Activated CD4-positive, alpha-beta memory T cell treated with anti-CD3 and anti-CD28 coated beads for 36 hours (primary cell): ENCODE measurements at regions of chr14 and their contacts with region 1.

Region 1: GRCh38 chr14:70600382-70601157 is at the start of gene MED6:
- DNase-seq: peak; percentile 97
- H3K4me3 Mint-ChIP-seq: peak within 1 kb of the TSS; percentile 99
- H3K27ac Mint-ChIP-seq: peak within 1 kb of the TSS; percentile 88
- H3K4me1 Mint-ChIP-seq: peaks cover 28% of the 10 kb centered on the region
- H3K27me3 Mint-ChIP-seq: no peaks in the 10 kb centered on the region
- total RNA-seq, gene MED6: 39.7 to 47.1 TPM

Region 2: DNA sequence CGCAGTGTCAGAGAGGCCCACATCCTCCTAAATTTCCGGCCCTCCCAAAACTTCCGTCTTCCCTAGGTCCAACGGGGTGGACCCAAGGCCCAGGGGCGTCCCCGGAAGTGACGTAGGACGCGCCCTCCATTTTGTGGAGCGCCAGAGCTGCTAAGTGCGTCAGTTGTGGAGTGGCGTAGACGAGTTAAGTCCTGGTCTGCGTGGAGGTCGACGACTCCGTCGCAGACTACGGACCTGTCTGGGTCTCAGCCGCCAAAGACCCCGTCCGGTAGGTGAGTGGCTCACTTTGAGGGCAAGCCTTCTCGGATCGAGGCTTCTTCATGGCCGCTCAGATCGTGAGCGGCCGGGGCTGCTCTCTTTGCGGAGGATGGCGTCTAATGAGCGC is 833.6 kb before region 1 on chr14 and contains the start of gene SRSF5:
- CTCF ChIA-PET with region 1: no interaction called
- POLR2A ChIA-PET with region 1: no interaction called
- intact Hi-C with region 1: loop called (anchors 1 kb)
- DNase-seq: peak; percentile 96
- H3K4me3 Mint-ChIP-seq: peak within 1 kb of the TSS; percentile 99
- H3K27ac Mint-ChIP-seq: peak within 1 kb of the TSS; percentile 99
- H3K4me1 Mint-ChIP-seq: peaks cover 73% of the 10 kb centered on the region
- H3K27me3 Mint-ChIP-seq: no peaks in the 10 kb centered on the region
- total RNA-seq, gene SRSF5: 289 to 303 TPM

Region 3: DNA sequence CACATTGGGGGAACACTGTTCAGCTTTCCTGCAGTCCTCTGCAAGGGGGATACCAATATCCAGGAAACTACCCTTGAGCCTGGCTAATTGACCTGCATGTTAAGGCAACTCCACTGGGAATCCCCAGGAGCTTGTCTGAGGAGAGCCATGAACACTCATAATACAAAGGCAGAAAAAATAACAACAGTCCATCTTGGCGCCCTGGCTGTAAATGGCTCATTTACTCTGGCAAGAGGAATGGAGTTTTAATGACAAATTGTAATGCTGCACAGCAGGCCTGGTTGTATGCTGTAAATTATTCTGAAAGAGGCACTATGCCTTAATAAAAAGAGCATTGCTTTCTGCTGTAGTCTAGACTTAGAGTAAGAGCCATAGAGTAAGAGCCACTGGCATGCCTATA is 470.1 kb before region 1 on chr14:
- CTCF ChIA-PET with region 1: no interaction called
- POLR2A ChIA-PET with region 1: no interaction called
- intact Hi-C with region 1: no loop called
- DNase-seq: no peak
- H3K4me3 Mint-ChIP-seq: no peak overlapping the region
- H3K27ac Mint-ChIP-seq: no peak overlapping the region
- H3K4me1 Mint-ChIP-seq: no peaks in the 10 kb centered on the region
- H3K27me3 Mint-ChIP-seq: peaks cover 19% of the 10 kb centered on the region

Region 4: DNA sequence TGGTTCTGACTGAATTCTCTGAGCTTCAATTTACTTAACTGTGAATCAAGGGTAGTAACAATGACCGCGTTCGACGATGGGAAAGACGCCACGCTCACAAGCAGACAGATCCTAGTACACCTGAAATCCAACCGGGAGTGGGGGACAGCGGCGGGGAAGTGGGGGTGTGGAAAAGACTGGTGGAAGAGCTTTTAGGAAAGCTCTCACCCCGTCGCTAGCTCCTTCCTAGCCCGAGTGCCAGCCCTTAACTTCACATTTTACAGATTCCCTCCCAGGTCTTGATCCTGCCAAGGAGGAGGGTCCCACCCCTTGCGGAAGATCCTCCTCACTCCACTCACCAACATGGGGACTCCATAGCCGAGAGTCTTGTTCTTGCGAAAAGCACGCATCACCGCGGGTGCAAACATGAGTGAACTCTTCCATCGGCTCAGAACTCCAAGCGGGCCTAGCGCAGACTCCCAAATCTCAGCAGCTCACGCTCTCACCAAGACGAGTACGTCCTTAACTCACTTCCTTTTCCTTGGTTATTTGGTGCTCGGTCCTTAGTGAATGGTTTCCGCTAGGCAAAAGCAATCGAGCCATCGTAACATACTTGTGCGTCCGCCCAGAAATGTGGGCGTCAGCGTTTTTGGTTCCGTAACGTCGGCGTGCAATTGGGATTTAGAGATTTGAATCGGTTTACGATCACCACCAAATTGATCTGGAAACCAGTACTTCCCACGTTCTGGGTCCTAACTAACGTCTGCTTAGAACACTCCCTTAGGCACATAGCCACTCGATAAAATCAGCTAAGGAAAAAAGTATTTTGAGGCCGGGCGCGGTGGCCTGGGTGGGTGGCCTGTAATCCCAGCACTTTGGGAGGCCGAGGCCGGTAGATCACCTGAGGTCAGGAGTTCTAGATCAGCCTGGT is 241.1 kb before region 1 on chr14 and contains the start of gene COX16:
- CTCF ChIA-PET with region 1: interaction called, 4 read pairs
- POLR2A ChIA-PET with region 1: no interaction called
- intact Hi-C with region 1: loop called (anchors 1 kb)
- DNase-seq: peak; percentile 90
- H3K4me3 Mint-ChIP-seq: peak within 1 kb of the TSS; percentile 99
- H3K27ac Mint-ChIP-seq: peak within 1 kb of the TSS; percentile 89
- H3K4me1 Mint-ChIP-seq: peaks cover 33% of the 10 kb centered on the region
- H3K27me3 Mint-ChIP-seq: no peaks in the 10 kb centered on the region
- total RNA-seq, gene COX16: 54.6 to 56.5 TPM

Region 5: DNA sequence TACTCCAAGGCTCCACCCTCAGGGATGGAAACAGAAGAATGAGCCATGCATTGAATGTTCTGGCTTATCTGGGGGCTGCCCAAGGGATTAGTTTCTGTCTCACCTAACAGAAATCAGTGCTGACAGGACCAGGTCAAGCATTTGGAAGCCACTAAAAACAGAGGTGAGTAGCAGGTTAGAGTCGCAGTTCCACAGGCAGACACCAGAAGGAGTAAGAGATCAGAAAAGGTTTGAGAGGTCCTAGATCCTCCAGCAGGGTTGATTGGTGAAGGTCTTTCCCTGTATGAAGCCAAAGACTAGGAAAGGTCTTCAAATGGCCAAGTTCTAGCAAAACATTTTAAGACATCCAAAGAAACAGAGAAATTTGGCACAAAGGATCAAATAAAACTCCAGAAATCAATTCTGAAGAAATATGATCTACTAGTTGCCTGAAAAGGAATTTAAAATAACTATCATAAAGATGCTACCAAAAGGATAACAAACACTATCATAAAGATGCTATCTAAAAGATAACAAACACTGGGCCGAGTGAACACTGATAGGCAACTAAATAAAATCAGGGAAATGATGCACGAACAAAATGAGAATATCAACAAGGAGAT is 21.6 kb after region 1 on chr14:
- CTCF ChIA-PET with region 1: no interaction called
- POLR2A ChIA-PET with region 1: no interaction called
- intact Hi-C with region 1: no loop called
- DNase-seq: peak; percentile 61
- H3K4me3 Mint-ChIP-seq: no peak overlapping the region
- H3K27ac Mint-ChIP-seq: no peak overlapping the region
- H3K4me1 Mint-ChIP-seq: no peaks in the 10 kb centered on the region
- H3K27me3 Mint-ChIP-seq: no peaks in the 10 kb centered on the region

Region 6: DNA sequence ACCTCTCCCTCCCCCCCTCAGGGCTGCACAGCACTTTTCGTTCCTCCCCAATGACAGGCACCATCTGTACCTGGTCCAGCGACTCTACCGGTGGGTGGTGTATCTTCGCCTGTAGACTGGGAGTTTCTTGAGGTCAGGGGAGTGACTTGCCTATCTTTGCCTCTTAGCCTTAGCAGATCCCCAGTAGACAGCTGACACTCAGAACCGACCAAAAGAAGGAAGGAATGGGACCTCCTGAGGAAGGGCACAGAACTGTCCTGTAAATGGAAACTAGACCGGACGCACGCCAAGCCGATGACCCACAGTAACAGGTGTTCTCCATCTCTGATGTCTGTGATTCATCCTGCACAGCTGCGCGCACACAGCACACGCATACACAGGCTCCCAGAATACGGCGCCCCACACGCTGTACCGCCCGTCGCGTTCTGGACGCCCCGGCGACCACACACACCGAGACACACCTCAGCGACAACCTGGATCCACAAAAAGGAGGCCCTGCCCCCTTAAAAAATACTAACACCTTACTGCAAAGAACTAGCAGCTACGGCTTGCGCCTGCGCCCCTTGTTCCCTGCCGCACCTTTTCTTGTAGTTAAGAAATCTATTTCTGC is 40.5 kb after region 1 on chr14:
- CTCF ChIA-PET with region 1: no interaction called
- POLR2A ChIA-PET with region 1: no interaction called
- intact Hi-C with region 1: loop called (anchors 2 kb)
- DNase-seq: peak; percentile 79
- H3K4me3 Mint-ChIP-seq: peak overlapping the region; percentile 89
- H3K27ac Mint-ChIP-seq: peak overlapping the region; percentile 92
- H3K4me1 Mint-ChIP-seq: peaks cover 44% of the 10 kb centered on the region
- H3K27me3 Mint-ChIP-seq: no peaks in the 10 kb centered on the region

Region 7: GRCh38 chr14:70655110-70655826 is 54.7 kb after region 1 on chr14:
- CTCF ChIA-PET with region 1: no interaction called
- POLR2A ChIA-PET with region 1: no interaction called
- intact Hi-C with region 1: loop called (anchors 5 kb)
- DNase-seq: peak; percentile 87
- H3K4me3 Mint-ChIP-seq: peak overlapping the region; percentile 84
- H3K27ac Mint-ChIP-seq: peak overlapping the region; percentile 99
- H3K4me1 Mint-ChIP-seq: peaks cover 86% of the 10 kb centered on the region
- H3K27me3 Mint-ChIP-seq: no peaks in the 10 kb centered on the region

Region 8: DNA sequence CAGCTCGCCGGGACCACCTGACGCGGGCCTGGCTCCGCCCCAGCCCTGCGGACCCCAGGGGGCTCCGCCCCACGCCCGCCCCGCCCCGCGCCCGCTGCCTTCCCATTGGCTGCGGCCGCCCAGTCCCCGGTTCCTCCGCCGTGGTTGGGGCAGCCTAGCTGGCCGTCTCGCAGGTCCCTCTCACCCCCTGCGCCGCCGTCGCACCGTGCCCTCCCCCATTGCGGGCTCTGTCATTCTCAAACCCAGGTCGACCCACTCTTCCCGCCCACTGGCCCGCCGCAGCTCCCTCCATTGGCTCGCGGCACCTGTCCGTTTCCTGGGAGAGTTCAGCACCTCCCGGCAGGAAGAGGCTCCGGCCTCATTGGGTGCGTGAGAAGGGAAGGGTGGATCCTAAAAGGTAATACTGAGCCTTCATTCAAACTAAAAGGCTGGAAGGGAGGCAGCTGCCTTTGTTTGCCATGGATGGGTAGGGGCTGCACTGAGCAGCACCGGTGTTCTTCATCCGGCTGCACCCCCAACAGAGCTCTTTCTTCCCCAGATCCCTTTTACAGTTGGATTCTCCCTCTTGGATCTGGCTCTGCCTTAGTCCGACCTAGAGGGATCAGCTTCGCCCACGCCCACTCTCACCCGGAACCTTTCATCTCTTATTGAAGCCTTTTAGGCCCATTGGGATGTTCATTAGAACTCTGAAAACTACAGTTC is 209.1 kb after region 1 on chr14:
- CTCF ChIA-PET with region 1: no interaction called
- POLR2A ChIA-PET with region 1: no interaction called
- intact Hi-C with region 1: loop called (anchors 2 kb)
- DNase-seq: peak; percentile 96
- H3K4me3 Mint-ChIP-seq: no peak overlapping the region
- H3K27ac Mint-ChIP-seq: no peak overlapping the region
- H3K4me1 Mint-ChIP-seq: peaks cover 6% of the 10 kb centered on the region
- H3K27me3 Mint-ChIP-seq: no peaks in the 10 kb centered on the region

Region 9: DNA sequence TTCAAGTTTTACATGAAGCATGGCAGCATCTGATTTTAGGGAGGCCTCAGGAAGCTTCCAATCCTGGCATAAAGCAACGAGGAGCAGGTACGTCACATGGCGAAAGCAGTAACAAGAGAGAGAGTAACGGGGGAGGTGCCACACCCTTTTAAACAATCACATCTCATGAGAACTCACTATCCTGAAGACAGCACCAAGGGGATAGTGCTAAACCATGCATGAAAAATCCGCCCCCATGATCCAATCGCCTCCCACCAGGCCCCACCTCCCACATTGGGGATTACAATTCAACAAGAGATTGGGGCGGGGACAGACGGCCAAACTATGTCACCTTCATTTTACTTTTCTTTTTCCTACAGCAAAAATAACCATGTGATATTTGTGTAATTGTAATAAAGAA is 216.0 kb after region 1 on chr14:
- CTCF ChIA-PET with region 1: no interaction called
- POLR2A ChIA-PET with region 1: no interaction called
- intact Hi-C with region 1: loop called (anchors 2 kb)
- DNase-seq: no peak
- H3K4me3 Mint-ChIP-seq: no peak overlapping the region
- H3K27ac Mint-ChIP-seq: no peak overlapping the region
- H3K4me1 Mint-ChIP-seq: peaks cover 8% of the 10 kb centered on the region
- H3K27me3 Mint-ChIP-seq: no peaks in the 10 kb centered on the region